ENCODE measurements at regions of chr9 and their contacts with region 1.

Region 1: DNA sequence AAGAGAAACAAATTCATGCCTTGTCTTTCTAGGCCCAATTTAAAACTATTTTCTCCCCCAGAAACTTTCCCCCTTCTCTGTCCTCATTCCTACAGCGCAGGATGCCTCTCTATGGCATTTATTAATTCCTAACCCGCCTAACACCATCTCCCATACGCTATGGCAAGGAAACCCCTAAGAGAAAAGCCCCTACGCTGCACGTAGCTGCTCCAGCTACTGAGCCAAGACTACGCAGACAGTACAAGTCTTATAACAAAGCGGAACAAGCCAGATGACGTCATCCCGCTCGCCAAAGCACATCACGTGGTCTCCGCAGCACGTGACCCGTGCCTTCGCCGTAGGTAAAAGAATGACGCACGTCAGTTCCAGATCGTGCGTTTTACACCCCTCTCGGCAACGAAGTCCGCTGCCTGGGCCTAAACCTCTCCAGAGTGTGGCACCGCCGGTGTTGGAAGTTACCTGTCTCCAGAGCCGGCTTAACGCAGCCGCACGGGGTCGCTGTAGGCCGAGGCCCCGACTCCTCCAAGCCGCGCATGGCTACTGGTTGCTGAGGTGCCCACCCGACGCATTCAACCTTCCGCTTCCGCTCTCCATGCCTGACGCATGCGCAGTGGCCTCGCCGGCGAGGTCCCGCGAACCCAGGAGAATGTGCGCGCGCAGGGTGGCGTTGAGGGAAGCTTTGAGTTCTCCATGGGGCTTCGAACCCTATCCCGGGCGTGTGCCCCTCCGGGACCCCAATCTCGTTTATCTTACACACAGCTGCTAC is at the start of gene TRMO:
- DNase-seq: peak; percentile 98
- H3K4me3 ChIP-seq: peak within 1 kb of the TSS; percentile 15 to 71 (median 56)
- H3K27ac ChIP-seq: peak within 1 kb of the TSS; percentile 89
- H3K4me1 ChIP-seq: peaks cover 11% of the 10 kb centered on the region
- H3K27me3 ChIP-seq: peaks cover 8 to 22% of the 10 kb centered on the region in 2 experiments
- CTCF ChIP-seq: peak; percentile 61 to 76
- POLR2A ChIP-seq: peak; percentile 98
- total RNA-seq, gene TRMO: 10.1 and 10.9 TPM in 2 replicates

Region 2: DNA sequence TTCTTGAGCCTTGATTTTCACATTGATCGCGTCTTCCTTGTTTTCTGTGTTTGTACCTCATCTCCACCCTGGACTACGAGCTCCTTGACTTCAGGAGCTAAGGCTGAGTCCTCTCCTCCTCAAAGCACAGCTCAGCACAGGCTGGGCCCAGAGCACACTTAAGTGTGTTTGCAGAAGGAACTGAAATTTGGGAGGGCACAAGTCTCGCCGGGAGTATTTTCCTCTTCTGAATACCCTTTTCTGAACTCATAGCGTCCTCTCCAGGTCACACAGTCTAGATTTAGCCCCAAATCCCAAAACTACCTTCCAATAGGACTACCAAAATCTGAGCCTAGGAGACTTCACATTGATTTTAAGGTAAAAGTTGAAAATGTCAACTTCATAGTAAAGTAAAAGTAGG is 330.6 kb before region 1 on chr9:
- CTCF ChIA-PET with region 1: no interaction called
- POLR2A ChIA-PET with region 1: no interaction called
- dilution Hi-C with region 1: no loop called
- intact Hi-C with region 1: no loop called
- DNase-seq: no peak
- H3K4me3 ChIP-seq: no peak overlapping the region
- H3K27ac ChIP-seq: no peak overlapping the region
- H3K4me1 ChIP-seq: no peaks in the 10 kb centered on the region
- H3K27me3 ChIP-seq: peaks cover 8% of the 10 kb centered on the region in 2 experiments
- CTCF ChIP-seq: no peak
- POLR2A ChIP-seq: no peak

Region 3: GRCh38 chr9:97632985-97633858 is 288.9 kb before region 1 on chr9 and contains the starts of genes NCBP1 and TSTD2:
- CTCF ChIA-PET with region 1: no interaction called
- POLR2A ChIA-PET with region 1: no interaction called
- dilution Hi-C with region 1: no loop called
- intact Hi-C with region 1: loop called (anchors 2 kb)
- DNase-seq: peak; percentile 99
- H3K4me3 ChIP-seq: peak within 1 kb of the TSS; percentile 83 to 100 (median 99)
- H3K27ac ChIP-seq: peak within 1 kb of the TSS; percentile 94
- H3K4me1 ChIP-seq: peaks cover 28% of the 10 kb centered on the region
- H3K27me3 ChIP-seq: no peaks in the 10 kb centered on the region
- CTCF ChIP-seq: peak in 1 of 2 donors; percentile 12
- POLR2A ChIP-seq: peak; percentile 90
- total RNA-seq, gene NCBP1: 42.8 and 45.3 TPM in 2 replicates
- total RNA-seq, gene TSTD2: 15.1 and 15.9 TPM in 2 replicates

Region 4: DNA sequence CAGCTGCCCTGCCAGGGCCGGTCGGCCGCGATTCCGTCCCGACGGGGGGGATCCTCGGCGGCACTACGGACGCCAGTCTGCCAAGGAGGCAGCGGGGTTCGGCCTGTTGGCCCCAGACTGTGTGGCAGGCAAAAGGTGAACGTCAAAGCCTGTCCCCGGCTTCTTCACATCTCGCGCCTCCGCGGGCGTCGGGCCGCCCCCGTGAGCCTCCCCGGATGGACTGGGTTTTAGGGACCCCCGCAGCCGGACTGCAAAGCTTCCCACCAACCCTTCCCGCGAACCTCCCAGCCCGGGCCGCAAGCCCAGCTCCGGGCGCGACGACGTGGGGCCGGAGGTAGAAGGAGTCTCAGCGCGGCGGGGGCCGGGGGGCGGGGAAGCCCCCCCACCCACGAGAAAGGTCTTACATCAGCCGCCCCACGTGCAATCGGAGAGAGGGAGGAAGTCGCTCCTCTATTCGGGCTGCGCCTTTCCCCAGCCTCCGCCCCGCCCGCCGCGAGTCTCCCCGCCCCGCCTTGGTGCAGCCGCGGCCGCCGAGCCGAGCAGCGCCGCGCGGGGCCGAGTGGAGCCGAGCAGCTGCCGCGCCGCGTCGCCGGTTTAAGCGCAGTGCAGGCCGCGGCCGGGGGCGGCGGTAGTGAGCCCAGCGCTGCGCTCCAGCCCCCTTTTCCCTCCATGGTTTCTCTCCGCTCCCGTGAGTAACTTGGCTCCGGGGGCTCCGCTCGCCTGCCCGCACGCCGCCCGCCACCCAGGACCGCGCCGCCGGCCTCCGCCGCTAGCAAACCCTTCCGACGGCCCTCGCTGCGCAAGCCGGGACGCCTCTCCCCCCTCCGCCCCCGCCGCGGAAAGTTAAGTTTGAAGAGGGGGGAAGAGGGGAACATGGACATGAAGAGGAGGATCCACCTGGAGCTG is 60.8 kb after region 1 on chr9 and contains the start of gene ANP32B:
- CTCF ChIA-PET with region 1: interaction called, 32 read pairs
- POLR2A ChIA-PET with region 1: interaction called, 3 read pairs
- dilution Hi-C with region 1: no loop called
- intact Hi-C with region 1: loop called (anchors 1 kb)
- DNase-seq: peak; percentile 92
- H3K4me3 ChIP-seq: peak within 1 kb of the TSS; percentile 64 to 90 (median 75)
- H3K27ac ChIP-seq: peak within 1 kb of the TSS; percentile 94
- H3K4me1 ChIP-seq: peaks cover 24% of the 10 kb centered on the region
- H3K27me3 ChIP-seq: no peaks in the 10 kb centered on the region
- CTCF ChIP-seq: peak; percentile 86 to 88
- POLR2A ChIP-seq: peak; percentile 53
- total RNA-seq, gene ANP32B: 152 and 173 TPM in 2 replicates

Region 5: DNA sequence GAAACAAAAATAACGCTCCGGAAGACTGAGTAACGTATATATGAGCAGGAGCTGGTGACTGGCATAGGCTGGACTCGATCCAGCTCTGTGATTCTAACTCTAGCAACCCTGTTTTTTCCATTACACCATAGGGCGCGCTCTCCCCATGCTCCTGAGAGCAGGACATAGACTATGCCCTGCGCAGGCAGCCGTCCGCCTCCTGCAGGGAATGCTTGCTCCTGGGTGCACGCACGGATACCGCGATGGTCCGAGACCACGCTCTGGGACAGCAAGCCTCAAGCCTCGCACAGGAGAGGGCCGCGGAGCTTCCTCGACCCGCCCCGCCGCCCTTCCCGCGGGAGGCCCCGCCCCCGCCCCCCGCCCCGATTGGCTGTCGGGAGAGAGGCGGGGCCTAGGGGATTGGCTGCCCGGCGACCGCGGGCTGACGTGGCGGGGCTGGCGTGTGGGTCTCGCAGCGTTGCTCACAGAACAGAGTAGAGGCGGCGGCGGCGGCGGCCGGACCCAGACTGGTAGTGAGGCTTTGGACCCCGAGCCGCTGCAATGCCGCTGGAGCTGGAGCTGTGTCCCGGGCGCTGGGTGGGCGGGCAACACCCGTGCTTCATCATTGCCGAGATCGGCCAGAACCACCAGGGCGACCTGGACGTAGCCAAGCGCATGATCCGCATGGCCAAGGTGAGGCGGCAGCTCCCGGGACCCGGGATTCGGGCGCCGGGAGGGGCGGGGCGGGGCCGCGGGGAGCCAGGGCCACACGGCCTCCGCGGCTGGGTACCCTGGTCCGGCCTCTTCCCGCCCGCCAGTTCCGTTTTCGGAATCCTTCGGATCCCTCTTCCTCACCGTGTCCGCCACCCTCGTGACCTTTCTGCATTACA is 134.4 kb after region 1 on chr9 and contains the start of gene NANS:
- CTCF ChIA-PET with region 1: interaction called, 9 read pairs
- POLR2A ChIA-PET with region 1: interaction called, 5 read pairs
- dilution Hi-C with region 1: no loop called
- intact Hi-C with region 1: loop called (anchors 1 kb)
- DNase-seq: peak; percentile 99
- H3K4me3 ChIP-seq: peak within 1 kb of the TSS; percentile 60 to 91 (median 69)
- H3K27ac ChIP-seq: peak within 1 kb of the TSS; percentile 80
- H3K4me1 ChIP-seq: peaks cover 15% of the 10 kb centered on the region
- H3K27me3 ChIP-seq: no peaks in the 10 kb centered on the region
- CTCF ChIP-seq: peak in 1 of 2 donors; percentile 8
- POLR2A ChIP-seq: peak; percentile 93
- total RNA-seq, gene NANS: 72.5 and 85.1 TPM in 2 replicates

Region 6: GRCh38 chr9:98192503-98193335 is 270.6 kb after region 1 on chr9 and contains the start of gene CORO2A:
- CTCF ChIA-PET with region 1: no interaction called
- POLR2A ChIA-PET with region 1: no interaction called
- dilution Hi-C with region 1: no loop called
- intact Hi-C with region 1: loop called (anchors 5 kb)
- DNase-seq: peak; percentile 66
- H3K4me3 ChIP-seq: peak within 1 kb of the TSS; percentile 37 to 73 (median 59)
- H3K27ac ChIP-seq: no peak within 1 kb of the TSS
- H3K4me1 ChIP-seq: no peaks in the 10 kb centered on the region
- H3K27me3 ChIP-seq: no peaks in the 10 kb centered on the region
- CTCF ChIP-seq: peak; percentile 29 to 64
- POLR2A ChIP-seq: no peak
- total RNA-seq, gene CORO2A: 0.30 and 0.53 TPM in 2 replicates

Region 7: GRCh38 chr9:98263482-98264357 is 341.6 kb after region 1 on chr9:
- CTCF ChIA-PET with region 1: interaction called, 24 read pairs
- POLR2A ChIA-PET with region 1: no interaction called
- dilution Hi-C with region 1: no loop called
- intact Hi-C with region 1: loop called (anchors 1 kb)
- DNase-seq: peak; percentile 82
- H3K4me3 ChIP-seq: no peak overlapping the region
- H3K27ac ChIP-seq: no peak overlapping the region
- H3K4me1 ChIP-seq: no peaks in the 10 kb centered on the region
- H3K27me3 ChIP-seq: no peaks in the 10 kb centered on the region
- CTCF ChIP-seq: peak; percentile 90 to 92
- POLR2A ChIP-seq: no peak

Region 8: DNA sequence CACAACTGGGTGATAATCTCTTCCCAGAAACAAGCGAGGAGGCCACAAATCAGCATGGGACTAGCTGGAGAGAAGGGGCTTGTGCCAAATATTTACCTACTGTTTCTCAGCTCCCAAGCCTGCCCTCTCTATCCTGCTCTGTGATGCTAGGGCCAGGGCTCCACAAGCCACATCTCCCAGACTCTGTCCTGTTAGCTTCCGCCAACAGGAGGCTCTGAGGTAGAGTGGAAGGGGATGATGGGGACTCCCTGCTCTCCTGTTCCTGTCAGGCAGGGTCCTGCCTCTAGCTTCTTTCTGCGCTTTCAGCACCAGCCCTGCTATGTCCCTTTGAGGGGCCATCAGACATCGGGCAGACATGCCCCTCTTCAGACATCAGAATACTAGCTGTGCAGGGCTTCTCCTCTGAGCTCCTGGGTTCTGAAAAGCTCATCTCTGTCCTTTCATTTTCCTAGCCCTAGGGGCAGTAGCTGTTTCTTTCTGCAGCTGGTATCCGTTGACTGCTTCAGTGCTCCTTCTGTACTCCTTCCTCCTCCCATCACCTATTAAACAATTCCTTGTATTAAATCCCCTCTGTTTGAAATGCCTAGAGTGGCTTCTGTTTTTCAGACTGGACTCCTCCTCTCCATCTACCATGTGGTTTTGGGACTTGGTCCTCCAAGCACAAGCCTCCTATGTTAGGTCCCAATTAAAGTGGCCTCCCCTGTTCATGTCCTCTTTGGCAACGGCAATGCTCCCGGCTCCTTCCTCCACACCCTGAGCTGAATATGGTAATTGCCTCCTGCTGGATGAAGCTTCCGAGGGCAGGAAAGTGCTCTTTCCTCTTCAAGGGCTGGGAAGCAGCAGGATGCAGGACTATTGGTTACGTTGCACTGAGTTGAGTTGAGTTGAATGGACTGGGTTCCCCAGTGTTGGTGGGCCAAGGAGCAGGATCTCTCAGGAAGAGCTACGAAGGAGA is 494.4 kb after region 1 on chr9:
- CTCF ChIA-PET with region 1: no interaction called
- POLR2A ChIA-PET with region 1: no interaction called
- dilution Hi-C with region 1: no loop called
- intact Hi-C with region 1: no loop called
- DNase-seq: no peak
- H3K4me3 ChIP-seq: no peak overlapping the region
- H3K27ac ChIP-seq: no peak overlapping the region
- H3K4me1 ChIP-seq: peaks cover 5% of the 10 kb centered on the region
- H3K27me3 ChIP-seq: no peaks in the 10 kb centered on the region
- CTCF ChIP-seq: no peak
- POLR2A ChIP-seq: no peak

Region 9: GRCh38 chr9:98775831-98776441 is 853.8 kb after region 1 on chr9:
- CTCF ChIA-PET with region 1: interaction called, 10 read pairs
- POLR2A ChIA-PET with region 1: no interaction called
- dilution Hi-C with region 1: no loop called
- intact Hi-C with region 1: no loop called
- DNase-seq: peak; percentile 68
- H3K4me3 ChIP-seq: no peak overlapping the region
- H3K27ac ChIP-seq: no peak overlapping the region
- H3K4me1 ChIP-seq: peaks cover 10% of the 10 kb centered on the region
- H3K27me3 ChIP-seq: no peaks in the 10 kb centered on the region
- CTCF ChIP-seq: peak; percentile 77 to 83
- POLR2A ChIP-seq: no peak

Region 10: DNA sequence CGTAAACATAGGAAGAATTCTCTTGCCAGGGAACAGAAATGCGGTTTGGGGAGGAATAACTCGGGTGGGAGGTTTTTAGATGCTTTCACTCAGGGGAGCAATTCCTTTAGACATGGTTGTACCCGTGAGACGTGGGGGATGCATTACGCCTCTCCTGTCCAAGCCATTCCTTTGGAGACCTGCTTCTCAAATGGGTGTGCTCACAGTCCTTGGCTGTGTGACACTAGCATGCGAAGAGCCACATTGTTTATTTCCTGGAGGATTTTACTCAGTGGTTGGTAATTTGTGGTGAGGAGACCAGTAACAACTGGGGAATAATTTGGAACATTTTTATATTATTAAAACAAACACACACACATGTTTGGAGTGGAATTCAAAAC is 1040.0 kb after region 1 on chr9:
- CTCF ChIA-PET with region 1: no interaction called
- POLR2A ChIA-PET with region 1: no interaction called
- dilution Hi-C with region 1: no loop called
- intact Hi-C with region 1: no loop called
- DNase-seq: no peak
- H3K4me3 ChIP-seq: no peak overlapping the region
- H3K27ac ChIP-seq: no peak overlapping the region
- H3K4me1 ChIP-seq: no peaks in the 10 kb centered on the region
- H3K27me3 ChIP-seq: no peaks in the 10 kb centered on the region
- CTCF ChIP-seq: no peak
- POLR2A ChIP-seq: no peak